CD8-positive, alpha-beta T cell (primary cell): ENCODE measurements at regions of chr6 and their contacts with region 1.

Region 1: DNA sequence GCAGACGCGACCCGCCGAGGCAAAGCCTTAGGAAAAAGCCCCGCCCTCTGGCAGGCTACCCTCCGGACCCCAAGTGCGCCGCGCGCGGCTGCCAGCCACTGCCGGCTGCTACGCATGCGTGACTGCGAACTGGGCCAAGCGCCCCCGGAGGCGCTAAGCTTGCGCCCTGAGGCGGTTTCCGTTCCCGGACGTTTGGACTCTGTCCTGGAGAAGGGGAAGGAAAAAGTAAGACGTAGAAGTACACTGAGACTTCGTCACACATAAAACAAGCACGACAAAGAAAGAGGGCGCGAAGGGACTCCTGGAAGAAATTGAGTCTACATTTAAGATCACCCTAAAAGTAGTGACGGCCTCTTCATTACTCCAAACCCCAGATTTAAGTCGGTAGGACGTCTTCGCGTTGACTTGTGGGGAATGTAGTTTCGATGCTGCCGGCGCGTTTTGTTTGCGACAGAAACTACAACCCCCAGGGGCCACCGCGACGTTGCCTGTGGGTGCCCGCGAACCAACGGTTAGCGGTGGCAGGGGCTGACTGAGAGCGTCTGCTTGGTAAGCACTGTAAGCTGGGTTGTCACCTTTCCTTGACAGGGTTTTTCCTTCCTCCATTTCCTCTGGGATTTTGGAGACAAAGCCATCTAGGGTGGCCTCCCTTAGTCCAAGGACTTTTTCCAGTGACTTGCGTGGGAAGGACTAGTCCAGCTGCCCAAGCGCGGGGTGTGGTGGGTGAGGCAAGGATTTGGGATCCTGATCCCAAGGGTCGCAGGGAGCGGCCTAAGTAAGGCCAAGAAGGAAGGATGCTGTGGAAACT is at the start of gene CEP57L1:
- DNase-seq: peak; percentile 89 to 98 (median 95)
- ATAC-seq: peak; percentile 78
- H3K4me3 ChIP-seq: peak within 1 kb of the TSS; percentile 74
- H3K4me3 Mint-ChIP-seq: peak within 1 kb of the TSS; percentile 96
- H3K27ac ChIP-seq: peak within 1 kb of the TSS; percentile 91 to 95
- H3K27ac Mint-ChIP-seq: peak within 1 kb of the TSS; percentile 99
- H3K4me1 ChIP-seq: peaks cover 31% of the 10 kb centered on the region
- H3K4me1 Mint-ChIP-seq: peaks cover 49% of the 10 kb centered on the region
- H3K27me3 ChIP-seq: no peaks in the 10 kb centered on the region
- H3K27me3 Mint-ChIP-seq: no peaks in the 10 kb centered on the region
- CTCF ChIP-seq: no peak
- total RNA-seq, gene CEP57L1: 2.9 to 3.7 TPM

Region 2: DNA sequence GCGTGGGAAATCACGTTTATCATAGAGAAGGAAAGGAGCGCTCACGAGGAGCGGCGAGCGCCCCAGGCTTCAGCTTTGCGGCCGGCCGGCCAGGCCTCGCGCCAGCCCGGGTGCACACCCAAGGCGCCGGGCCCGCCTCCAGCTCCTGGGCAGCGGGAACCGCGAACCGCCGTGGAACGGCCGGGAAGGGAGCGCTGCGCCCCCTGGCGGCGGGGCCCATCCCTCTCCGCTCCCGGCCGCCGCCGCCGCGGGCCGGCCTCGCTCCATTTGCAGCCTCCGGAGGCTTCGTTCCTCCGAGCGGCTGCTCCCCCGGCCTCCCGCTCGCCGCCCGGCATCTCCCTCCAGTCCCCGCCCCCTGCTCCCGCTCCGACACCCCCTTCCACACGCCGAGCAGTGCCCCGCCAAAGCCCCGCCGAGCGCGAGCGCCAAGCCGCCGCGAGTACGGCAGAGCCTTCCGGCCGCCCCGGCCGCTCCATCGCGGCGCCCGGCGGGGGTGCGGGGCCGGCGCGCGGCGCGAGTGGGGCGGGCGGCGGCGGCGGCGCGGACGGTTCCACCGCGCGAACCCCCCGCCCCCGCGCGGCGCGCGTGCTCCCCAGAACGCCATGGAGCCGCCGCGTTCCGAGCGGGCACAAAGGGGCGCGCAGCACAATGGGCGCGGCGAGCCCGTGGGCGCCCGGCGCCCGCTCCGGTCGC is 1980.9 kb before region 1 on chr6:
- CTCF ChIA-PET with region 1: no interaction called
- POLR2A ChIA-PET with region 1: no interaction called
- intact Hi-C with region 1: loop called in 1 of 2 experiments (anchors 5 kb)
- DNase-seq: peak; percentile 28 to 83 (median 65)
- ATAC-seq: peak; percentile 53
- H3K4me3 ChIP-seq: peak overlapping the region; percentile 12 to 24
- H3K4me3 Mint-ChIP-seq: peak overlapping the region; percentile 83
- H3K27ac ChIP-seq: no peak overlapping the region
- H3K27ac Mint-ChIP-seq: no peak overlapping the region
- H3K4me1 ChIP-seq: peaks cover 11% of the 10 kb centered on the region
- H3K4me1 Mint-ChIP-seq: peaks cover 15% of the 10 kb centered on the region
- H3K27me3 ChIP-seq: peaks cover 0 to 8% of the 10 kb centered on the region in 2 experiments
- H3K27me3 Mint-ChIP-seq: no peaks in the 10 kb centered on the region
- CTCF ChIP-seq: peak; percentile 90

Region 3: GRCh38 chr6:107957909-107958688 is 1137.1 kb before region 1 on chr6 and contains the start of gene SEC63:
- CTCF ChIA-PET with region 1: no interaction called
- POLR2A ChIA-PET with region 1: no interaction called
- intact Hi-C with region 1: loop called (anchors 1 to 5 kb)
- DNase-seq: peak; percentile 95 to 98 (median 96)
- ATAC-seq: peak; percentile 97
- H3K4me3 ChIP-seq: peak within 1 kb of the TSS; percentile 91
- H3K4me3 Mint-ChIP-seq: peak within 1 kb of the TSS; percentile 98
- H3K27ac ChIP-seq: peak within 1 kb of the TSS; percentile 81 to 82
- H3K27ac Mint-ChIP-seq: peak within 1 kb of the TSS; percentile 92
- H3K4me1 ChIP-seq: peaks cover 16% of the 10 kb centered on the region
- H3K4me1 Mint-ChIP-seq: peaks cover 37% of the 10 kb centered on the region
- H3K27me3 ChIP-seq: no peaks in the 10 kb centered on the region
- H3K27me3 Mint-ChIP-seq: no peaks in the 10 kb centered on the region
- CTCF ChIP-seq: no peak
- total RNA-seq, gene SEC63: 77.8 to 88.2 TPM

Region 4: GRCh38 chr6:108294727-108295625 is 800.3 kb before region 1 on chr6 and contains the start of gene AFG1L:
- CTCF ChIA-PET with region 1: no interaction called
- POLR2A ChIA-PET with region 1: no interaction called
- intact Hi-C with region 1: loop called (anchors 2 to 10 kb)
- DNase-seq: peak; percentile 72 to 92 (median 86)
- ATAC-seq: peak; percentile 92
- H3K4me3 ChIP-seq: peak within 1 kb of the TSS; percentile 94 to 96
- H3K4me3 Mint-ChIP-seq: peak within 1 kb of the TSS; percentile 89
- H3K27ac ChIP-seq: peak within 1 kb of the TSS; percentile 94 to 95
- H3K27ac Mint-ChIP-seq: peak within 1 kb of the TSS; percentile 97
- H3K4me1 ChIP-seq: peaks cover 13% of the 10 kb centered on the region
- H3K4me1 Mint-ChIP-seq: peaks cover 26% of the 10 kb centered on the region
- H3K27me3 ChIP-seq: no peaks in the 10 kb centered on the region
- H3K27me3 Mint-ChIP-seq: no peaks in the 10 kb centered on the region
- CTCF ChIP-seq: no peak
- total RNA-seq, gene AFG1L: 3.3 to 4.0 TPM

Region 5: GRCh38 chr6:108848116-108848868 is 246.9 kb before region 1 on chr6 and contains the start of gene ARMC2:
- CTCF ChIA-PET with region 1: no interaction called
- POLR2A ChIA-PET with region 1: interaction called, 3 read pairs
- intact Hi-C with region 1: loop called in 1 of 2 experiments (anchors 1 kb)
- DNase-seq: peak; percentile 65 to 94 (median 85)
- ATAC-seq: peak; percentile 88
- H3K4me3 ChIP-seq: peak within 1 kb of the TSS; percentile 63 to 80
- H3K4me3 Mint-ChIP-seq: peak within 1 kb of the TSS; percentile 88
- H3K27ac ChIP-seq: peak within 1 kb of the TSS; percentile 67 to 73
- H3K27ac Mint-ChIP-seq: peak within 1 kb of the TSS; percentile 66
- H3K4me1 ChIP-seq: peaks cover 11% of the 10 kb centered on the region
- H3K4me1 Mint-ChIP-seq: peaks cover 29% of the 10 kb centered on the region
- H3K27me3 ChIP-seq: no peaks in the 10 kb centered on the region
- H3K27me3 Mint-ChIP-seq: no peaks in the 10 kb centered on the region
- CTCF ChIP-seq: no peak
- total RNA-seq, gene ARMC2: 4.2 to 6.1 TPM

Region 6: GRCh38 chr6:109440331-109441068 is 345.3 kb after region 1 on chr6 and contains the starts of genes PPIL6 and SMPD2:
- CTCF ChIA-PET with region 1: no interaction called
- POLR2A ChIA-PET with region 1: interaction called, 3 read pairs
- intact Hi-C with region 1: loop called (anchors 2 to 5 kb)
- DNase-seq: peak; percentile 61 to 92 (median 75)
- ATAC-seq: peak; percentile 79
- H3K4me3 ChIP-seq: peak within 1 kb of the TSS; percentile 68 to 92
- H3K4me3 Mint-ChIP-seq: peak within 1 kb of the TSS; percentile 89
- H3K27ac ChIP-seq: peak within 1 kb of the TSS; percentile 69 to 83
- H3K27ac Mint-ChIP-seq: peak within 1 kb of the TSS; percentile 93
- H3K4me1 ChIP-seq: peaks cover 26% of the 10 kb centered on the region
- H3K4me1 Mint-ChIP-seq: peaks cover 35% of the 10 kb centered on the region
- H3K27me3 ChIP-seq: no peaks in the 10 kb centered on the region
- H3K27me3 Mint-ChIP-seq: no peaks in the 10 kb centered on the region
- CTCF ChIP-seq: peak; percentile 31
- total RNA-seq, gene PPIL6: 1.3 to 1.4 TPM
- total RNA-seq, gene SMPD2: 22.8 to 23.9 TPM

Region 7: GRCh38 chr6:110179401-110180227 is 1084.4 kb after region 1 on chr6 and contains the start of gene WASF1:
- CTCF ChIA-PET with region 1: no interaction called
- POLR2A ChIA-PET with region 1: no interaction called
- intact Hi-C with region 1: loop called in 1 of 2 experiments (anchors 2 kb)
- DNase-seq: peak; percentile 77 to 95 (median 89)
- ATAC-seq: peak; percentile 84
- H3K4me3 ChIP-seq: peak within 1 kb of the TSS; percentile 83 to 96
- H3K4me3 Mint-ChIP-seq: peak within 1 kb of the TSS; percentile 77
- H3K27ac ChIP-seq: peak within 1 kb of the TSS; percentile 72 to 79
- H3K27ac Mint-ChIP-seq: peak within 1 kb of the TSS; percentile 38
- H3K4me1 ChIP-seq: peaks cover 28% of the 10 kb centered on the region
- H3K4me1 Mint-ChIP-seq: peaks cover 7% of the 10 kb centered on the region
- H3K27me3 ChIP-seq: no peaks in the 10 kb centered on the region
- H3K27me3 Mint-ChIP-seq: peaks cover 9% of the 10 kb centered on the region
- CTCF ChIP-seq: no peak
- total RNA-seq, gene WASF1: 1.1 to 1.7 TPM